ENCODE measurements at regions of chr3 and their contacts with region 1.

Region 1: DNA sequence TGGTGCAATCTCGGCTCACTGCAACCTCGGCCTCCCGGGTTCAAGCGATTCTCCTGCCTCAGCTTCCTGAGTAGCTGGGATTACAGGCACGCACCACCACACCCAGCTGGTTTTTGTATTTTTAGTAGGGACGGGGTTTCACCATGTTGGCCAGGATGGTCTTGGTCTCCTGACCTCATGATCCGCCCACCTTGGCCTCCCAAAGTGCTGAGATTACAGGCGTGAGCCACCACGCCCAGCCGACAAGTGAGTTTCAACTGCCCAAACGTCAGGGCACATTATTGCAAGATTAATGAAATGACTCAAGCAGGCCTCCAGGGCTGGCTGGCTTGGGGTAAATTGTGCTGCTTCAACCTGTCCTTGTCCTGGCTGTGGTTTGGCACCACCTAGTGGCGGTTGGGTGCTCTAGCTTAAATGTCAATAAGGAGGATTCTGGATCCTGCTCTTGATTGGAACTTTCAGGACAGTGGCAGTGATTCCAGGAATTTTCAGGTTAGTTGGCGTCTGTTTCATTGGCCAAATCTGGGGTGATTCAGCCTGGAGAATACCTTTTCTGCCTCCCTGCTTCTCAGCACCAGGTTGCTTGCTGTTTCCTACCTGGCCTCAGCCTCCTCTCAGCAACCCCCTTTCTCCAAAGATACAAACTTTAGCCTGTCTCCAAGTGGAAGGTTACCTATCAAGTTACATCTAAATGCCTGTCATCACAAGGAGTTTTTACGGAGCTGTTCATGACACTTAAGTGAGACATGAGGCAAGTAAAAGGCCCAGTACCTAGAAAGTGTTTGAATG is 32.4 kb upstream of the SACM1L start:
- DNase-seq: peak; percentile 89 to 90
- H3K4me3 ChIP-seq: no peak overlapping the region
- H3K4me3 Mint-ChIP-seq: no peak overlapping the region
- H3K27ac Mint-ChIP-seq: no peak overlapping the region
- H3K4me1 ChIP-seq: peaks cover 10% of the 10 kb centered on the region
- H3K4me1 Mint-ChIP-seq: peaks cover 6% of the 10 kb centered on the region
- H3K27me3 ChIP-seq: no peaks in the 10 kb centered on the region
- H3K27me3 Mint-ChIP-seq: no peaks in the 10 kb centered on the region
- CTCF ChIP-seq: peak; percentile 86 to 89

Region 2: GRCh38 chr3:43699864-43700263 is 1956.9 kb before region 1 on chr3:
- CTCF ChIA-PET with region 1: interaction called, 10 read pairs
- POLR2A ChIA-PET with region 1: no interaction called
- intact Hi-C with region 1: no loop called
- DNase-seq: peak in 1 of 2 experiments; percentile 27
- H3K4me3 ChIP-seq: no peak overlapping the region
- H3K4me3 Mint-ChIP-seq: no peak overlapping the region
- H3K27ac Mint-ChIP-seq: no peak overlapping the region
- H3K4me1 ChIP-seq: peaks cover 23% of the 10 kb centered on the region
- H3K4me1 Mint-ChIP-seq: peaks cover 27% of the 10 kb centered on the region
- H3K27me3 ChIP-seq: no peaks in the 10 kb centered on the region
- H3K27me3 Mint-ChIP-seq: no peaks in the 10 kb centered on the region
- CTCF ChIP-seq: peak in 1 of 2 experiments; percentile 46

Region 3: GRCh38 chr3:45224824-45225464 is 431.8 kb before region 1 on chr3:
- CTCF ChIA-PET with region 1: no interaction called
- POLR2A ChIA-PET with region 1: no interaction called
- intact Hi-C with region 1: loop called (anchors 10 kb)
- DNase-seq: peak; percentile 74 to 84
- H3K4me3 ChIP-seq: peak overlapping the region; percentile 44
- H3K4me3 Mint-ChIP-seq: peak overlapping the region; percentile 74
- H3K27ac Mint-ChIP-seq: no peak overlapping the region
- H3K4me1 ChIP-seq: peaks cover 5% of the 10 kb centered on the region; the same call in 1 of the 2 replicates
- H3K4me1 Mint-ChIP-seq: no peaks in the 10 kb centered on the region
- H3K27me3 ChIP-seq: peaks cover 4% of the 10 kb centered on the region; the same call in 1 of the 2 replicates
- H3K27me3 Mint-ChIP-seq: peaks cover 14% of the 10 kb centered on the region
- CTCF ChIP-seq: peak; percentile 39 to 68

Region 4: DNA sequence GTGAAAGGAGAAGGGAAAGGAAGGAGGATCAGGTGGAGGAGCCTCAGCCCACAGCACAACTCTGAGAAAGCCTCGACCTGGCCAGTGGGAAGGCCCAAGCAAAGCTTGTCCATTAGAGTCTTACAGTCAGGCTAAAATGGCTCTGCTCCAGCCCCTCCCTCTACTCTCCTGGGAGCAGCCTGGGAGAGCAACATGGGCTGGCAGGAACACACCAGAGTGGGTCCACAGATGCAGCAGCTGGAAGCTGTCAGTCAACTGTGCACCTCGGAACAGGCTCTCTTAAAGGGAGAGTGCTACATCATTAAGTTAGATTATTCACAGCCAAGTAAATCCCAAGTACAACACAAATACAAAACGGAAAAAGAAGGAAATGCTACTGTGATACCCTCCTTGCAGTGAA is 160.2 kb before region 1 on chr3:
- CTCF ChIA-PET with region 1: no interaction called
- POLR2A ChIA-PET with region 1: no interaction called
- intact Hi-C with region 1: no loop called
- DNase-seq: no peak
- H3K4me3 ChIP-seq: no peak overlapping the region
- H3K4me3 Mint-ChIP-seq: no peak overlapping the region
- H3K27ac Mint-ChIP-seq: peak overlapping the region; percentile 3
- H3K4me1 ChIP-seq: no peaks in the 10 kb centered on the region
- H3K4me1 Mint-ChIP-seq: no peaks in the 10 kb centered on the region
- H3K27me3 ChIP-seq: no peaks in the 10 kb centered on the region
- H3K27me3 Mint-ChIP-seq: no peaks in the 10 kb centered on the region
- CTCF ChIP-seq: no peak

Region 5: GRCh38 chr3:45507820-45508317 is 148.9 kb before region 1 on chr3:
- CTCF ChIA-PET with region 1: interaction called, 9 read pairs
- POLR2A ChIA-PET with region 1: no interaction called
- intact Hi-C with region 1: loop called (anchors 1 kb)
- DNase-seq: peak in 1 of 2 experiments; percentile 15
- H3K4me3 ChIP-seq: no peak overlapping the region
- H3K4me3 Mint-ChIP-seq: no peak overlapping the region
- H3K27ac Mint-ChIP-seq: no peak overlapping the region
- H3K4me1 ChIP-seq: no peaks in the 10 kb centered on the region
- H3K4me1 Mint-ChIP-seq: peaks cover 6% of the 10 kb centered on the region
- H3K27me3 ChIP-seq: no peaks in the 10 kb centered on the region
- H3K27me3 Mint-ChIP-seq: no peaks in the 10 kb centered on the region
- CTCF ChIP-seq: peak in 1 of 2 experiments; percentile 24

Region 6: DNA sequence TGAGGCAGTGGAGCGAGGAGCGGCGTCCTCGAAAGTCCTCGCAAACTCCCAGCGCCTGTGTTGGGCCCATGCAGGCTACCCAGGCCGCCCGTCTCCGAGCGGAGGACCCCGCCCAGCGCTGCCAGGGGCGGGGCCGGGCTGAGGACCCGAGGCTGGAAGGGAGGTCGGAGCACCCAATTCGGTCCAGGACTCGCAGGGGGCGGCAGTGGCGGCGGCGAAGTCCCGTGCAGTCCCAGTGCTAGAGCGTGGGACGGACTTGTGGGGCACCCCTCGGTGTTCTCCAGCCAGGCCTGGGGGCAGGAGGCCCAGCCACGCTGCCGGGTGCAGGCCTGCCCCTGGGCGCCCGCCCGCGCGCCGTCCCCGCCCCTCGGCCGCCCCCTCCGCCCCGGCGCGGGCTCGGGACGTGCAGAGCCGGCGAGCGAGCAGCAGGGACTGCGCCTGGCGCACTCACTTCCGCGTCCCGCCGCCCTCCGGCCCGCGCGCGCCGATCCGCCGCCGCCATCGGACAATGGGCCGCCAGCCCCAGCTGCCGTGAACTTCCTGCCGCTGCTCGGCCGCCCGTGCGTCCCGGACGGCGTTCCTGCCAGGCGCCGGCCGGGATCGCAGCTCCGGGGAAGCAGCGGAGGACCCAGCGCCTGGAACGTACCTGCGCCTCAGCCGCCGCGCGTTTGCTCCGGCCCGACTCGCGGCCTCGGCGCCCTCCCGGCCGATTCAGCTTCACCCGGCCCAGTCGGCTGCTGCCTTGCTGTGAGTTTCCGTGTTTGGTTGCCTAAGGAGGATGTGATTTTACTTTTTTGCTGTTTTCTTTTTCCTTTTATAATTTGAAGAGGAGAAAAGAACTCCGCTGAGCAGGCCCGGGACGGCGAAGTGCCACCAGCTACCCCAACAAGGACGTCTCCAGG is 62.8 kb before region 1 on chr3:
- CTCF ChIA-PET with region 1: interaction called, 8 read pairs
- POLR2A ChIA-PET with region 1: no interaction called
- intact Hi-C with region 1: loop called (anchors 1 kb)
- DNase-seq: peak; percentile 79 to 86
- H3K4me3 ChIP-seq: peak overlapping the region; percentile 80
- H3K4me3 Mint-ChIP-seq: peak overlapping the region; percentile 83
- H3K27ac Mint-ChIP-seq: peak overlapping the region; percentile 85
- H3K4me1 ChIP-seq: peaks cover 19% of the 10 kb centered on the region
- H3K4me1 Mint-ChIP-seq: peaks cover 17% of the 10 kb centered on the region
- H3K27me3 ChIP-seq: no peaks in the 10 kb centered on the region
- H3K27me3 Mint-ChIP-seq: no peaks in the 10 kb centered on the region
- CTCF ChIP-seq: no peak

Region 7: DNA sequence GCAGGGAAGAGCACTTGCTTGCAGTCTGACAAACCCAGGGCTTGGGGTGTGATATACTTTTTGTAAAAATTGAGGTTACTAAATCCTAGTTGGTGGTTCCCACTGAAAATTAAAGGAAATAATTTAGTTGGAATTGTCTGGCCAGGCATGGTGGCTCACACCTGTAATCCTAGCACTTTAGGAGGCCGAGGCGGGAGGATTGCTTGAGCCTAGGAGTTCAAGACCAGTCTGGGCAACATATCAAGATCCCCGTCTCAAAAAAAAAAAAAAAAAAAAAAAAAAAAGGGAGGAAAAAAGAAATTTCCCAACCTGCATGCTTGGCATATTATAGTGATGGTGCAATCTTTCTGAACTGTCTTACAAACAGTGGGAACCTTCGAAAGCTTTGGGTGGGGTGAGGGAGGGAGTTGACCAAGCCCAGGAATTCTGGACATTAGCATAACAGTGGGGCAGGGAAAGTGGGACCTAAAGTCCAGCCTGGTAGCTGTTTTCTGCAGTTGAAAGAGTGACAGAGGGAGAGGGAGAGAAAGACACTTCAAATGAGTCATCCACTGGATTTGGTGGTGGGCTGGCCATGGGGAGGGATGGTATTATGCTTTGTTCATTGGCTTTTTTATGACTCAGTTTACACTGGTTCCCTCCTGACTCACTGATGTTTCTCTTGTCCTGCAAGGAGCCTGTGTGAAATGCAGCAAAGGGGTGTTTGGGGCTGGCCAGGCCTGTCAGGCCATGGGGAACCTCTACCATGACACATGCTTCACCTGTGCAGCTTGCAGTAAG is 21.1 kb before region 1 on chr3:
- CTCF ChIA-PET with region 1: interaction called, 13 read pairs
- POLR2A ChIA-PET with region 1: no interaction called
- intact Hi-C with region 1: loop called (anchors 2 kb)
- DNase-seq: peak; percentile 82 to 84
- H3K4me3 ChIP-seq: no peak overlapping the region
- H3K4me3 Mint-ChIP-seq: peak overlapping the region; percentile 52
- H3K27ac Mint-ChIP-seq: peak overlapping the region; percentile 96
- H3K4me1 ChIP-seq: peaks cover 51% of the 10 kb centered on the region
- H3K4me1 Mint-ChIP-seq: peaks cover 30% of the 10 kb centered on the region
- H3K27me3 ChIP-seq: no peaks in the 10 kb centered on the region
- H3K27me3 Mint-ChIP-seq: no peaks in the 10 kb centered on the region
- CTCF ChIP-seq: no peak

Region 8: GRCh38 chr3:45688882-45689756 is 32.4 kb after region 1 on chr3 and contains the start of gene SACM1L:
- CTCF ChIA-PET with region 1: interaction called, 17 read pairs
- POLR2A ChIA-PET with region 1: no interaction called
- intact Hi-C with region 1: no loop called
- DNase-seq: peak; percentile 96 to 98
- H3K4me3 ChIP-seq: peak within 1 kb of the TSS; percentile 69
- H3K4me3 Mint-ChIP-seq: peak within 1 kb of the TSS; percentile 70
- H3K27ac Mint-ChIP-seq: peak within 1 kb of the TSS; percentile 96
- H3K4me1 ChIP-seq: peaks cover 19% of the 10 kb centered on the region
- H3K4me1 Mint-ChIP-seq: peaks cover 38% of the 10 kb centered on the region
- H3K27me3 ChIP-seq: no peaks in the 10 kb centered on the region
- H3K27me3 Mint-ChIP-seq: peaks cover 4% of the 10 kb centered on the region
- CTCF ChIP-seq: no peak
- total RNA-seq, gene SACM1L: 51.0 and 53.5 TPM in 2 replicates

Measured in Caco-2 (cell line).